Natural killer cell (primary cell): ENCODE measurements at regions of chr6 and their contacts with region 1.

Region 1: GRCh38 chr6:26196846-26197648 is 109.8 kb downstream of the HFE start:
- DNase-seq: peak; percentile 65 to 94
- ATAC-seq: peak; percentile 53 to 73 (median 62)
- H3K4me3 ChIP-seq: peak overlapping the region; percentile 92
- H3K4me3 Mint-ChIP-seq: peak overlapping the region; percentile 96
- H3K27ac ChIP-seq: peak overlapping the region; percentile 94
- H3K27ac Mint-ChIP-seq: peak overlapping the region; percentile 98 to 99
- H3K4me1 ChIP-seq: peaks cover 26% of the 10 kb centered on the region
- H3K4me1 Mint-ChIP-seq: peaks cover 45 to 51% of the 10 kb centered on the region in 2 donors
- H3K27me3 ChIP-seq: no peaks in the 10 kb centered on the region
- H3K27me3 Mint-ChIP-seq: no peaks in the 10 kb centered on the region
- CTCF ChIP-seq: no peak

Region 2: GRCh38 chr6:26025894-26026832 is 170.9 kb before region 1 on chr6:
- intact Hi-C with region 1: loop called (anchors 10 kb)
- DNase-seq: peak; percentile 86 to 98
- ATAC-seq: peak; percentile 41 to 60 (median 44)
- H3K4me3 ChIP-seq: peak overlapping the region; percentile 52
- H3K4me3 Mint-ChIP-seq: peak overlapping the region; percentile 87
- H3K27ac ChIP-seq: peak overlapping the region; percentile 96
- H3K27ac Mint-ChIP-seq: peak overlapping the region; percentile 99 to 100
- H3K4me1 ChIP-seq: peaks cover 22% of the 10 kb centered on the region
- H3K4me1 Mint-ChIP-seq: peaks cover 38 to 42% of the 10 kb centered on the region in 2 donors
- H3K27me3 ChIP-seq: no peaks in the 10 kb centered on the region
- H3K27me3 Mint-ChIP-seq: peaks cover 0 to 2% of the 10 kb centered on the region in 2 donors
- CTCF ChIP-seq: peak; percentile 80

Region 3: DNA sequence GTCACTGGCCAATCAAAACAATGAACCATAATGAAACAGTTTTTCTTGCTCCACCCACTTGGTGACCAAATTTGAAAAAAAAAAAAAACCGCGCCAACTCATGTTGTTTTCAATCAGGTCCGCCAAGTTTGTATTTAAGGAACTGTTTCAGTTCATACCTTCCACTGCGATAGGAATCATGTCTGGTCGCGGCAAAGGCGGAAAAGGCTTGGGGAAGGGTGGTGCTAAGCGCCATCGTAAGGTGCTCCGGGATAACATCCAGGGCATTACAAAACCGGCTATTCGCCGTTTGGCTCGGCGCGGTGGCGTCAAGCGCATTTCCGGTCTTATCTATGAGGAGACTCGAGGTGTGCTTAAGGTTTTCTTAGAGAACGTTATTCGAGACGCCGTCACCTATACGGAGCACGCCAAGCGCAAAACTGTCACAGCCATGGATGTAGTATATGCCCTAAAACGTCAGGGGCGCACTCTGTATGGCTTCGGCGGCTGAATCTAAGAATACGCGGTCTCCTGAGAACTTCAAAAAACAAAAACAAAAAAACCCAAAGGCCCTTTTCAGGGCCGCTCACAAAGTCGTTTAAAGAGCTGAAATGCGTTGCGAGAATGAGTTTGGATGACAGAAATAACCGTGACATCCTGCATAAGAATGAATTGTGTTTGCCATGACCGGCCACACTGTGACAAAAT is 93.1 kb before region 1 on chr6:
- intact Hi-C with region 1: loop called (anchors 5 kb)
- DNase-seq: peak; percentile 86 to 95
- ATAC-seq: peak; percentile 87 to 96 (median 88)
- H3K4me3 ChIP-seq: peak overlapping the region; percentile 41
- H3K4me3 Mint-ChIP-seq: peak overlapping the region; percentile 90
- H3K27ac ChIP-seq: peak overlapping the region; percentile 84
- H3K27ac Mint-ChIP-seq: peak overlapping the region; percentile 98 to 99
- H3K4me1 ChIP-seq: peaks cover 10% of the 10 kb centered on the region
- H3K4me1 Mint-ChIP-seq: peaks cover 18% of the 10 kb centered on the region in 2 donors
- H3K27me3 ChIP-seq: no peaks in the 10 kb centered on the region
- H3K27me3 Mint-ChIP-seq: no peaks in the 10 kb centered on the region
- CTCF ChIP-seq: peak; percentile 41

Region 4: GRCh38 chr6:26175428-26176181 is 21.4 kb before region 1 on chr6:
- intact Hi-C with region 1: loop called (anchors 1 kb)
- DNase-seq: peak in 1 of 2 donors; percentile 87
- ATAC-seq: no peak
- H3K4me3 ChIP-seq: no peak overlapping the region
- H3K4me3 Mint-ChIP-seq: peak overlapping the region; percentile 78
- H3K27ac ChIP-seq: peak overlapping the region; percentile 6
- H3K27ac Mint-ChIP-seq: peak overlapping the region; percentile 77 to 83
- H3K4me1 ChIP-seq: peaks cover 17% of the 10 kb centered on the region
- H3K4me1 Mint-ChIP-seq: peaks cover 37 to 39% of the 10 kb centered on the region in 2 donors
- H3K27me3 ChIP-seq: no peaks in the 10 kb centered on the region
- H3K27me3 Mint-ChIP-seq: no peaks in the 10 kb centered on the region
- CTCF ChIP-seq: peak; percentile 86

Region 5: GRCh38 chr6:26216356-26216885 is 19.4 kb after region 1 on chr6:
- intact Hi-C with region 1: loop called (anchors 2 kb)
- DNase-seq: peak; percentile 68 to 94
- ATAC-seq: peak; percentile 77 to 92 (median 79)
- H3K4me3 ChIP-seq: peak overlapping the region; percentile 63
- H3K4me3 Mint-ChIP-seq: no peak overlapping the region
- H3K27ac ChIP-seq: peak overlapping the region; percentile 91
- H3K27ac Mint-ChIP-seq: no peak overlapping the region
- H3K4me1 ChIP-seq: peaks cover 27% of the 10 kb centered on the region
- H3K4me1 Mint-ChIP-seq: no peaks in the 10 kb centered on the region
- H3K27me3 ChIP-seq: no peaks in the 10 kb centered on the region
- H3K27me3 Mint-ChIP-seq: no peaks in the 10 kb centered on the region
- CTCF ChIP-seq: no peak

Region 6: GRCh38 chr6:27138837-27139755 is 942.0 kb after region 1 on chr6:
- intact Hi-C with region 1: loop called (anchors 2 kb)
- DNase-seq: peak; percentile 59 to 89
- ATAC-seq: peak; percentile 89 to 92 (median 91)
- H3K4me3 ChIP-seq: peak overlapping the region; percentile 92
- H3K4me3 Mint-ChIP-seq: peak overlapping the region; percentile 93
- H3K27ac ChIP-seq: peak overlapping the region; percentile 100
- H3K27ac Mint-ChIP-seq: peak overlapping the region; percentile 97 to 98
- H3K4me1 ChIP-seq: peaks cover 23% of the 10 kb centered on the region
- H3K4me1 Mint-ChIP-seq: peaks cover 37 to 41% of the 10 kb centered on the region in 2 donors
- H3K27me3 ChIP-seq: no peaks in the 10 kb centered on the region
- H3K27me3 Mint-ChIP-seq: no peaks in the 10 kb centered on the region
- CTCF ChIP-seq: no peak

Region 7: GRCh38 chr6:27838058-27838944 is 1641.3 kb after region 1 on chr6:
- intact Hi-C with region 1: loop called (anchors 5 kb)
- DNase-seq: peak; percentile 78 to 97
- ATAC-seq: peak; percentile 66 to 86 (median 79)
- H3K4me3 ChIP-seq: peak overlapping the region; percentile 82
- H3K4me3 Mint-ChIP-seq: no peak overlapping the region
- H3K27ac ChIP-seq: peak overlapping the region; percentile 98
- H3K27ac Mint-ChIP-seq: no peak overlapping the region
- H3K4me1 ChIP-seq: peaks cover 32% of the 10 kb centered on the region
- H3K4me1 Mint-ChIP-seq: peaks cover 6 to 7% of the 10 kb centered on the region in 2 donors
- H3K27me3 ChIP-seq: no peaks in the 10 kb centered on the region
- H3K27me3 Mint-ChIP-seq: no peaks in the 10 kb centered on the region
- CTCF ChIP-seq: no peak